Tibial artery (tissue), 4 donors: ENCODE measurements at regions of chr4 and their contacts with region 1.

Region 1: DNA sequence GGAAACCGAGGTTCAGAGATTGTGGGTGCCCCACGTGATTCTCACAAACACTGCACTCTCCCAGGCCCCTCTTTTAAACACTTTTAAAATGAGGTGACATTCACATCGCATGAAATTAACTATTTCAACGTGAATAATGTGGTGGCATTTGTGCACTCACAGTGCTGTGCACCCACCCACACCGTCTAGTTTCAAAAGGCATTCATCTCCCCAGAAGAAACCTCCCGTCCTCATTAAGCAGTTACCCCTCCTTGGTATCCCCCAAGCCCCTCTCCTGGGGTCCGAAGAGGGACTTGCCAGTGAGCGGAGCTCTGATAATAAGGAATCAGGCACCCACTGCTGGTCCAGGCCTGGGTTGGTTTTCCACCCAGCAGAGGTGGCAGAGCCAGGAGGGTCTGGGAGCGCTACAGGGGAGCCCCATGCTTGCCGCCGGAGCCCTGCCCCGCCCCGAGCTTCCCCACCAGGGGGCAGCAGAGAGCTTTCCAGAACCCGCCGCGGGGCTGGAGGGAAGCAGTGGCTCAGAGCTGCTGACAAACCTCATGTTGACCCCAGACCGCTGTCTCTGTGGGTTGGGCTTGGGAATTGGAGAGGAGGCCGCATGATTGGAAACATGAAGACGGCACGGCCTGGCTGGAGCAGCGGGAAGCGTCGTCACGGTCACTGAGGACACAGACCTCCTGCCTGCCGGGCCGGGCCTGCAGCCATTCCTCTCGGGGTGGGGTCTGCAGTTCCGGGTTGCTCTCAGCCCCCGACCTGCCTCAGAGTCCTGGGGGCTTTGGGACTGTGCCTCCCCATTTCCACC is 27.5 kb upstream of the HTRA3 start:
- DNase-seq: peak; percentile 89 to 91
- H3K4me3 ChIP-seq: no peak overlapping the region
- H3K27ac ChIP-seq: no peak overlapping the region
- H3K4me1 ChIP-seq: peaks cover 0 to 11% (median 9%) of the 10 kb centered on the region in 4 donors
- H3K27me3 ChIP-seq: peaks cover 0 to 13% of the 10 kb centered on the region in 2 donors
- CTCF ChIP-seq: peak; percentile 88 to 97

Region 2: GRCh38 chr4:8402640-8403039 is 160.5 kb after region 1 on chr4:
- intact Hi-C with region 1: loop called (anchors 1 kb)
- DNase-seq: peak; percentile 54 to 80
- H3K4me3 ChIP-seq: no peak overlapping the region
- H3K27ac ChIP-seq: peak overlapping the region; percentile 74 to 87
- H3K4me1 ChIP-seq: peaks cover 0 to 32% (median 21%) of the 10 kb centered on the region in 4 donors
- H3K27me3 ChIP-seq: no peaks in the 10 kb centered on the region
- CTCF ChIP-seq: no peak

Region 3: GRCh38 chr4:8594097-8595038 is 352.3 kb after region 1 on chr4:
- intact Hi-C with region 1: loop called (anchors 5 kb)
- DNase-seq: peak in 1 of 2 donors; percentile 35
- H3K4me3 ChIP-seq: no peak overlapping the region
- H3K27ac ChIP-seq: no peak overlapping the region
- H3K4me1 ChIP-seq: peaks cover 0 to 17% (median 6%) of the 10 kb centered on the region in 4 donors
- H3K27me3 ChIP-seq: peaks cover 0 to 48% of the 10 kb centered on the region in 2 donors
- CTCF ChIP-seq: peak; percentile 54 to 59